ENCODE measurements at regions of chrX and their contacts with region 1.

Region 1: GRCh38 chrX:100244681-100245080 is 165.4 kb downstream of the PCDH19 start:
- DNase-seq: no peak
- H3K4me3 ChIP-seq: no peak overlapping the region
- H3K27ac ChIP-seq: no peak overlapping the region
- H3K4me1 ChIP-seq: no peaks in the 10 kb centered on the region
- H3K27me3 ChIP-seq: no peaks in the 10 kb centered on the region
- CTCF ChIP-seq: no peak
- EP300 ChIP-seq: no peak
- POLR2A ChIP-seq: no peak

Region 2: DNA sequence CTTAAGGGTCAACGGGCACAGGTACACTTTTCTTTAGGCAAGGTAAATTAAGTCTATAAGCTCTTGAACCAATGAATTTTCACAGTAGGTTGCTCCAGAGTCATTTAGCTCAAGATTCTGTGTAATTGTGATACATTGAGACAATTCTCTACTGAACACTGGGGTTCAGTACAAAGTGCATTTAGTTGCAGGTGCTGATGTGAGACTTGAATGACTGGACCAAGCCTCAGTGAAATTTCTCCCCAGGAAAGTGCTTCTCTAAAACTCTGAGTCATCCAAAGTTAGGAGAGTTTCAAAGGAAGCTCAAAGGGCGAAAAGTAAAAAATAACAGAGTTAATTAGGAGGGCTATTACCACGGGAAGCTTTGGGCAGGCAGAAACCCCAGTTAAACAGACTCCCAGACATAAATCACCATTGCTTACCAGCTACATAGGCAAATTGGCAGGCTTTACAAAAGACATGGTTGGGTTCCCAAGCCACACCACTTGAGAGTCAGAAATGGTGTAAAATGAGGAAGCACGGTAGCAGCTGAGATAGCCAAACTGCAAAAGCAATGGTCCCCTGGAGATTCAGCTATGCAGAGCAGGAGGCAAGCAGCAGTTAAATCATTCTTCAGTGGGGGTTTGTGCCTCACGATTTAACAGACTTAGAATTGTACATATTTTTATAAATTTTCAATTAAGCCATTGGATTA is 37.2 kb before region 1 on chrX:
- intact Hi-C with region 1: loop called in 1 of 4 experiments (anchors 1 kb)
- DNase-seq: no peak
- H3K4me3 ChIP-seq: no peak overlapping the region
- H3K27ac ChIP-seq: no peak overlapping the region
- H3K4me1 ChIP-seq: no peaks in the 10 kb centered on the region
- H3K27me3 ChIP-seq: no peaks in the 10 kb centered on the region
- CTCF ChIP-seq: no peak
- EP300 ChIP-seq: no peak
- POLR2A ChIP-seq: no peak

Region 3: GRCh38 chrX:100274916-100275315 is 30.2 kb after region 1 on chrX:
- intact Hi-C with region 1: no loop called
- DNase-seq: no peak
- H3K4me3 ChIP-seq: no peak overlapping the region
- H3K27ac ChIP-seq: no peak overlapping the region
- H3K4me1 ChIP-seq: no peaks in the 10 kb centered on the region
- H3K27me3 ChIP-seq: no peaks in the 10 kb centered on the region
- CTCF ChIP-seq: no peak
- EP300 ChIP-seq: no peak
- POLR2A ChIP-seq: no peak

Measured in ovary (tissue), 10 donors.